Calu3 (cell line): ENCODE measurements at regions of chr5 and their contacts with region 1.

Region 1: GRCh38 chr5:61731946-61732314 is 399.9 kb downstream of the ZSWIM6 start:
- DNase-seq: no peak
- H3K4me3 Mint-ChIP-seq: no peak overlapping the region
- H3K27ac Mint-ChIP-seq: no peak overlapping the region
- H3K4me1 Mint-ChIP-seq: peaks cover 49% of the 10 kb centered on the region
- H3K27me3 Mint-ChIP-seq: peaks cover 39% of the 10 kb centered on the region
- CTCF ChIP-seq: no peak

Region 2: DNA sequence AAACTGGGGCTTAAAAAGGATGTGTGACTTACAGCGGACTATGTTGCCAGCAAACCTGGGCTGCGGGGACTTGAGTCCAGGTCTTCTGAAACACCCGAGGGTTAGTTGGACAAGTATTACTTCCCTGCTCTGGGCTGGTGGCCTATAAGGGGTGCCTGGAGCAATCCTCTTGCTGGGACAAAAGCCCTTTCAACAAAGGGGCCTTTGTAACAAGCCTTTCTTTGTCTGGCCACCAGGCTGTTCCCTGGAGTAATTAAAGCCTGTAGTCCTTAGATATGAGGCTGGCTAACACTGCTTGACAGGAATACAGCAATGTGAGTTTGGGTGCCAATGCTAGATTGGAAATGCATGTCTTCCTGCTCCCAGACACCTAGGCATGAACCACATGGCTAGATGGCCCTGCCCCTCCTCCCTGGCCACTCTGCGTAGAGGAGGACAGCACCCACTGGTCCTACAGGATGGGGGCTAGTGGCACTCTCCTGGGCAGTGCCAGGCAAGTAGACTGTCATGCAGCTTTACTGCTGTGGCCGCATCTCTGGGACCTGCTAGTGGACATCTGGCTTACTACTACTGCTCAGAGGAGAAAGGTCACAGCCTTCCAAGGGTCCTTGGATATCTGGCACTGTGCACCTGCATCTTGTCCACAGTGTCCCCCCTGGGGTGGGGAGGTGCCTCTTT is 56.8 kb before region 1 on chr5:
- CTCF ChIA-PET with region 1: no interaction called
- intact Hi-C with region 1: loop called (anchors 5 kb)
- DNase-seq: peak; percentile 53
- H3K4me3 Mint-ChIP-seq: no peak overlapping the region
- H3K27ac Mint-ChIP-seq: no peak overlapping the region
- H3K4me1 Mint-ChIP-seq: peaks cover 22% of the 10 kb centered on the region
- H3K27me3 Mint-ChIP-seq: peaks cover under 1% of the 10 kb centered on the region
- CTCF ChIP-seq: no peak

Region 3: DNA sequence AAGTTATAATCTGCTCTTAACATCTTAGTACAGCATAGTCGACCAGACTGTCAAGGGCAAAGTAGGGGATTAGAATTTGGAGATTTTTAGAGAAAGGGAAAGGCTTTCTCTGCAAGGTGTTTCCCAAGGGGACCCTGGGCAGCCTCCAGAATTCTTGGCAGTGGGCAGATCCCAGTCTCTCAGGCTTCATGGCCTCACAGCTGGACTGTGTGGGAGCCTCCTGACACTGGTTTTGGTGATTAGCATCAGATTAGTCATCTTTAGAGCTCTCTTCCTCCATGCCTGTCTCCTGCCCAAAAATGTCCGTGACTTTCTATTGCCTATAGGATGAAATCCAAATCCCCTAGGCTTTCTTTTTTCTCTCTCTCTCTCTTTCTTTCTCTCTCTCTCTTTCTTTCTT is 29.1 kb before region 1 on chr5:
- CTCF ChIA-PET with region 1: no interaction called
- intact Hi-C with region 1: loop called (anchors 1 kb)
- DNase-seq: no peak
- H3K4me3 Mint-ChIP-seq: no peak overlapping the region
- H3K27ac Mint-ChIP-seq: no peak overlapping the region
- H3K4me1 Mint-ChIP-seq: peaks cover 11% of the 10 kb centered on the region
- H3K27me3 Mint-ChIP-seq: peaks cover 8% of the 10 kb centered on the region
- CTCF ChIP-seq: no peak

Region 4: DNA sequence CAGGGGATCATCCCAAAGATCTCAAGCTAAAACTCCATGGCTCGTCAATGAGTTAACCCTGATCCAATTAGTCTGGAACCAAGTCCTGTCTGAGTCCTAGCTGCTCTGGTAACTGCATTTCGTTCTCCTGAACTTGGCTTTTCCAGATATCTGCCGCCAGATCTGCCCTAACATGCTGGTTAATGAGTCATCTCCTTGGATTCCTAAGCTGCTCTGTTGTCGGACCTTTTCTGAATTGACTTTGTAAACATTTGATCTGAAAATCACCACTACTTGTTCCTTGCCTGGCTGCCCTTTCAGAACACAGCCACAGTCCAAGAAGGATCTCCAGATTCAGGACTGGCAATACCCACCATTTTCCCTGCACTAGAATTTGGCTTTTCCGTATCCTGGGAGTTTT is 73.2 kb after region 1 on chr5:
- CTCF ChIA-PET with region 1: no interaction called
- intact Hi-C with region 1: loop called (anchors 2 kb)
- DNase-seq: peak; percentile 24
- H3K4me3 Mint-ChIP-seq: no peak overlapping the region
- H3K27ac Mint-ChIP-seq: no peak overlapping the region
- H3K4me1 Mint-ChIP-seq: peaks cover 39% of the 10 kb centered on the region
- H3K27me3 Mint-ChIP-seq: no peaks in the 10 kb centered on the region
- CTCF ChIP-seq: no peak